ENCODE measurements at regions of chr2 and their contacts with region 1.

Region 1: GRCh38 chr2:67476809-67477790 is 80.0 kb downstream of the ETAA1 start:
- DNase-seq: peak in 3 of 4 experiments; percentile 11 to 18 (median 14)
- ATAC-seq: peak; percentile 71
- H3K4me3 ChIP-seq: no peak overlapping the region
- H3K27ac ChIP-seq: no peak overlapping the region
- H3K4me1 ChIP-seq: no peaks in the 10 kb centered on the region
- H3K27me3 ChIP-seq: no peaks in the 10 kb centered on the region
- CTCF ChIP-seq: peak in 2 of 3 experiments; percentile 52; a peak in 5 of 6 replicates
- EP300 ChIP-seq: no peak
- POLR2A ChIP-seq: no peak
- RAD21 ChIP-seq: peak; percentile 39 to 58; a peak in 3 of 4 replicates

Region 2: DNA sequence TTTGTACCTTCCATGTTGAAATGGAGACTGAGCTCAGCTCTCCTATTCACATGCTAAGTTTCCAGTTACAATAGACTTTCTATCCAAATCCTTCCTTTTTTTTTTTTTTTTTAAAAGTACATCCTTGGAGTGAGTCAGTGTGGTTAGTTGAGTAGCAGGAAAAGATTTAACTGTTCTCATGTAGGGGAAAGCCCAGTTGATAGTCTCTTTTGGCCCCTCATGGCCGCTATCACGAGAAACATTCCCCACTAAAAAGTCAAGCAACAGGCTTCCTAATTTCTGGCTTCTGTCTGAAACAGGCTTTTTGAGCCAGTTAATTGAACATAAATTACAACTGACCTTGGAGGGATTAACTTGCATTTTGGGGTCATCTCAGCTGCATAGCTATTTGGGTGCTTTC is 880.8 kb before region 1 on chr2:
- CTCF ChIA-PET with region 1: no interaction called
- POLR2A ChIA-PET with region 1: no interaction called
- in situ Hi-C with region 1: no loop called
- intact Hi-C with region 1: loop called (anchors 10 kb)
- DNase-seq: no peak
- ATAC-seq: no peak
- H3K4me3 ChIP-seq: no peak overlapping the region
- H3K27ac ChIP-seq: no peak overlapping the region
- H3K4me1 ChIP-seq: no peaks in the 10 kb centered on the region
- H3K27me3 ChIP-seq: peaks cover 0 to 3% of the 10 kb centered on the region in 2 experiments; a peak in 1 of 5 replicates
- CTCF ChIP-seq: no peak
- EP300 ChIP-seq: no peak
- POLR2A ChIP-seq: no peak
- RAD21 ChIP-seq: no peak

Region 3: DNA sequence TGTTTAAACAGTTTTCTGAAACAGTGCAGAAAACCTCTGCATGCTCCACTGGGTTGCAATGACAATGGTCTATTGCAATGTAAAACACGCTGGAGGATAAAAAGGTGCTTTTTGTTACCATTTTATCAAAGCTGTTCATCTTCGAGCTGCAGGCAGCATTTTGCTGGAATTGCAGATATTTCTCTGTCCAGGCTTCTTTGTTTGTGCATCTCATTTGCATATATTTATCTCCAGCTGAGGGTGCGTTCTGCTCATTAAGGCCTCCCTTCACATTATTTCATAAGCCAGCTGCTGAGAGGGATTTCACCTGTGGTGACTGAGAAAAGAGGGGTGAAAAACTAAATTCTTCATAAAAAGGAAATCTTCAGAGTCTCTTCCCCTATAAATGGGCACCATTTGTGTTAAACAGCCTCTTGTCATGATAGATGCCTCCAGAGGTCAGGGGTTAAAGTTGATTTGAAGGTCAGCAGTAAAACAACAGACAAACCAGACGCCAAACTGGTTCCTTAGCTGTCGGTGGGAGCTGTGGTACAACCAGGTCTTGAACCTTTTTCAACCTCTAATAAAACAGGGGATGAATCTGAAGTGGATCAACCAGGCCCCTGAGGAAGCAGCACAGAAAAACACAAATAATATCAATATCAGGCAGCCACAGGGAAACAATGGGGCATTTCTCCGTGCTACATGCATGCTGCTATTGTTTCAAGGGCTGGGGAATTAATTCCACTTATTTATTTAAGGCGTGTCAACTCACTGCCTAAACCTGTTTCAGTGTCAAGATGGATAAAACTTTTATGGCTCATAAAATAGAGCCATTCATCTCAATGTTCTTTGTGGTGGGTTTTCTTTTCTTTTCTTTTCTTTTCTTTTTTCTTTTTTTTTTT is 777.1 kb before region 1 on chr2:
- CTCF ChIA-PET with region 1: no interaction called
- POLR2A ChIA-PET with region 1: no interaction called
- in situ Hi-C with region 1: no loop called
- intact Hi-C with region 1: loop called (anchors 10 kb)
- DNase-seq: peak in 1 of 4 experiments; percentile 14
- ATAC-seq: no peak
- H3K4me3 ChIP-seq: no peak overlapping the region
- H3K27ac ChIP-seq: no peak overlapping the region
- H3K4me1 ChIP-seq: no peaks in the 10 kb centered on the region
- H3K27me3 ChIP-seq: no peaks in the 10 kb centered on the region
- CTCF ChIP-seq: no peak
- EP300 ChIP-seq: no peak
- POLR2A ChIP-seq: no peak
- RAD21 ChIP-seq: no peak

Region 4: GRCh38 chr2:67412424-67412823 is 64.7 kb before region 1 on chr2:
- CTCF ChIA-PET with region 1: no interaction called
- POLR2A ChIA-PET with region 1: no interaction called
- in situ Hi-C with region 1: no loop called
- intact Hi-C with region 1: no loop called
- DNase-seq: no peak
- ATAC-seq: no peak
- H3K4me3 ChIP-seq: no peak overlapping the region
- H3K27ac ChIP-seq: no peak overlapping the region
- H3K4me1 ChIP-seq: no peaks in the 10 kb centered on the region
- H3K27me3 ChIP-seq: no peaks in the 10 kb centered on the region
- CTCF ChIP-seq: no peak
- EP300 ChIP-seq: no peak
- POLR2A ChIP-seq: no peak
- RAD21 ChIP-seq: no peak